Activated B cell treated with CpG ODN at 0.5 μM for 24 hours (primary cell): ENCODE measurements at regions of chr2 and their contacts with region 1.

Region 1: DNA sequence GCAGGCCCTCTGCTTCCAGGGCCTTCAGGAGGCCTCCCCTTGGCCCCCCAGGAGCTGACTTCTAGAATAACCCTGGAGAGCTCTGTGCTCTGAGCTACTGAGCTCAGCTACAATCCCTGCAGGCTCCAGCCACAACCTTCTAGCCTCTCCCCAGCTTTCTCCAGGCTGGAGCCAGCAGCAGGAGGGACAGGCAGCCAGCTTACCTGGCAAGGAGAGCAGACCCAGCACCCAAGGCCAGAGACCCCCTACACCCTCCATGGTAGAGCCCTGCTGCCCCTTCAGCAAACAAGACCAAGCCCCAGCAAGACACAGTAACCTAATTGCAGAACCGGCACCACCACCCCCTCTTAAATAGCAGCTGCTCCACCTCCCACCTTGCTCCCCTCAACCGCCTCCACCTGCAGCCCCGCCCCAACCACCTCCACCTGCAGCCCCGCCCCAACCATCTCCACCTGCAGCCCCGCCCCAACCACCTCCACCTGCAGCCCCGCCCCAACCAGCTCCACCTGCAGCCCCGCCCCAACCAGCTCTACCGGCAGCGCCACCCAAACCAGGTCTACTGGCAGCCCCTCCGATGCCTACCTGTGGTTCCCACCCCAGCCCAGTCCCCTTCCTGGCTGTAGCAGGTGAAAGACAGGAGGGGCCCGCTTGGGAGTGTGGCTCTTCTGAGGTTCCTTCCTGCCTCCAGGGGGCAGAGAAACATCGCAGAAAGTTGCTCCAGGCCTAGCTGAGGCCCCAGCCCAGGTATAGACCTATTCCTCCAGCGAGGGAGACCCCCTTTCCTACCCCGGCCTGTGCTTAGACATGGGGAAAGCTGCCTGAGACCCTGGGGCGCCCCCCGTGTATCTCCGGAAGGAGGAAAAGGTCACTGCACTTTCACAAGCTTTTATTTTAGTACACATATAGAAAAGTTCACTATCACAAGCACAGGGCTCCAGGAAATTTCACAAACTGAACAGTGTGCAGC is at the start of gene ASTL:
- DNase-seq: peak; percentile 53
- ATAC-seq: peak; percentile 73
- H3K4me3 Mint-ChIP-seq: peak within 1 kb of the TSS; percentile 38
- H3K27ac Mint-ChIP-seq: peak within 1 kb of the TSS; percentile 35
- H3K4me1 Mint-ChIP-seq: peaks cover 37% of the 10 kb centered on the region
- H3K27me3 Mint-ChIP-seq: no peaks in the 10 kb centered on the region
- CTCF ChIP-seq: no peak
- total RNA-seq, gene ASTL: 1.0 and 1.6 TPM in 2 replicates

Region 2: GRCh38 chr2:96116879-96117697 is 21.4 kb before region 1 on chr2:
- CTCF ChIA-PET with region 1: interaction called, 8 read pairs
- POLR2A ChIA-PET with region 1: no interaction called
- intact Hi-C with region 1: loop called (anchors 2 kb)
- DNase-seq: peak; percentile 82
- ATAC-seq: peak; percentile 79
- H3K4me3 Mint-ChIP-seq: peak overlapping the region; percentile 71
- H3K27ac Mint-ChIP-seq: peak overlapping the region; percentile 41
- H3K4me1 Mint-ChIP-seq: peaks cover 25% of the 10 kb centered on the region
- H3K27me3 Mint-ChIP-seq: peaks cover 22% of the 10 kb centered on the region
- CTCF ChIP-seq: peak; percentile 56

Region 3: GRCh38 chr2:96164459-96165184 is 26.2 kb after region 1 on chr2:
- CTCF ChIA-PET with region 1: interaction called, 22 read pairs
- POLR2A ChIA-PET with region 1: interaction called, 534 read pairs
- intact Hi-C with region 1: no loop called
- DNase-seq: peak; percentile 43
- ATAC-seq: peak; percentile 73
- H3K4me3 Mint-ChIP-seq: peak overlapping the region; percentile 65
- H3K27ac Mint-ChIP-seq: peak overlapping the region; percentile 95
- H3K4me1 Mint-ChIP-seq: peaks cover 55% of the 10 kb centered on the region
- H3K27me3 Mint-ChIP-seq: no peaks in the 10 kb centered on the region
- CTCF ChIP-seq: no peak

Region 4: GRCh38 chr2:96233880-96234316 is 95.4 kb after region 1 on chr2:
- CTCF ChIA-PET with region 1: interaction called, 11 read pairs
- POLR2A ChIA-PET with region 1: interaction called, 4 read pairs
- intact Hi-C with region 1: no loop called
- DNase-seq: peak; percentile 37
- ATAC-seq: peak; percentile 99
- H3K4me3 Mint-ChIP-seq: peak overlapping the region; percentile 70
- H3K27ac Mint-ChIP-seq: peak overlapping the region; percentile 84
- H3K4me1 Mint-ChIP-seq: peaks cover 17% of the 10 kb centered on the region
- H3K27me3 Mint-ChIP-seq: no peaks in the 10 kb centered on the region
- CTCF ChIP-seq: no peak

Region 5: DNA sequence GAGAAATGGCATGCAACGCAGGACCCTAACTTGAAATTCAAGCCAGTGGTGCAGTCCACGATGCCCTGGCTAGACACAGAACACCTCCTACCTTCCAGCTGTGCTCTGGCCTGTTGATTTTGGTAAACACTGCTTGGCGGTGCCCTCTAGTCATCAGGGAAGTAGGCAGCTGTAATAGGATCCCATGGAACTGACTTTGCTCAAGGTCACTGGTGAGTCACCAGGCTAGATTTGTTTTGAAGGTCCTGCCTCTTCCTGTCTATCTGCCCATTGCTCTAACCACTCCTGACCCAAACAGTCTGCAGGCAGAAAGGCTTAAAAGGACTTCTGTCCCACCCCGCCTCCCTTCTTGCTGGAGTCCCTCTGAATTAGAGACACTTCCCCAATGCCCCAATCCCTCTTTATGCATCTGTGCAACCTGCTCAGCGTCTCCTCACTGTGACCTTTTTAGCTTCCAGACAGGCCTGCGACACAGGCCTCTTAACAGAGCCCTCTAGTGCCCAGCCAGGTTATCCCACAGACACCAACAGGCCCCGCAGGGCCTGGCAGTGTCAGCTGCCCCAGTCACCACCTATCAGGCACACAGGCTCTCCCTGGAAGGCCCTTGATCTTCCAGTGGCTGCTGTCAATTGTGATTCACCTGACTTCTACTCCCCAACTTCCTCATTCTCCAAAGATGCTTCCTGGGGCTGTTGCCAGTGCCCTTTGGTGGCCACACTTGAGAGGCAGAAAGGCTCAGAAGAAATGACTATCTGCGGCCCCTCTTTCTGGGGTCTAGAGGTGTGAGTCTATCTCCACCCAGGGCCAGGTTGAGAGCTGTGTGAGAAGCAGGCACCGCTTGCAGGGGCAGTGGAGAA is 122.2 kb after region 1 on chr2:
- CTCF ChIA-PET with region 1: interaction called, 16 read pairs
- POLR2A ChIA-PET with region 1: interaction called, 11 read pairs
- intact Hi-C with region 1: loop called (anchors 1 kb)
- DNase-seq: no peak
- ATAC-seq: peak; percentile 56
- H3K4me3 Mint-ChIP-seq: peak overlapping the region; percentile 36
- H3K27ac Mint-ChIP-seq: peak overlapping the region; percentile 80
- H3K4me1 Mint-ChIP-seq: peaks cover 89% of the 10 kb centered on the region
- H3K27me3 Mint-ChIP-seq: no peaks in the 10 kb centered on the region
- CTCF ChIP-seq: no peak